ENCODE measurements at regions of chr16 and their contacts with region 1.

Region 1: DNA sequence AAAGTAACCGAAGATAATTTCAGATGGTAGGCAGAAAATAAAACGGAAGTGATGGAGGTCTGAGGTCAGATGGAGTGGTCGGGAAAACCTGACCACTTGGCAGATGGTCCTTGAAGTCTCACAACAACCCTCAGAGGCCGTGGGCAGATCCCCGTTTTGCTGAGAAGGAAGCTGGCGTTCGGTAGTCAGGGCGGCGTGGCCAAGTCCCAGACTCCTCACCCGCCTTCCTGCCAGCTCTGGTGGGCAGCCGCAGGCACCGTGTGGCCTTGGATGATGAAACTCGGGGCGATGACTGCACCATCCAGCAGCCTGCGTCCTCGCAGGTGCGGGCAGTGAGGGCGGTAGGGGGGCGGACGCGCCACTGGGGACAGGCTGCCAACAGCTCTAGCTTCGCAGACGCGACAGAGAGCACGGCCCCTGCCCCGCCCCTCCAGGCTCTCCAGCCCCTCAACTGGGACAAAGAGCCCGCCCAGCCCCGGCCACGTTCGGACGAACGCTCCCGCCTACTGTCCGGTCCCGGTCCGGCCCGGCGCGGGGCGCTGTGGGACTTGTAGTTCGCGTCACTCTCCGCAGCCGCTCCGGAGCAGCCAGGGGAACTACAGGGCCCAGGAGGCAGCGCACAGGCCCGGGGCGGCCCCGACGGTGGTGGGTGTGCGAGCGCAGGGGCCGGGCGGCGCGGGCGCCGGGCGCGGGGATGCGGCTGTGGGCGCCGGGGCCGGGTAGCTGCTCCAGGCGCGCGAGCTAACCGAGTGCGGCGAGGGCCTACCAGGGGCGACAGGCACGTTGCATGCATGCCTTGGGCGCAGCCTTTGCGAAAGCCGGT is at the start of gene GPT2:
- DNase-seq: peak; percentile 82
- H3K4me3 Mint-ChIP-seq: peak within 1 kb of the TSS; percentile 87
- H3K27ac Mint-ChIP-seq: peak within 1 kb of the TSS; percentile 76
- H3K4me1 Mint-ChIP-seq: peaks cover 17% of the 10 kb centered on the region
- H3K27me3 Mint-ChIP-seq: peaks cover 12% of the 10 kb centered on the region
- total RNA-seq, gene GPT2: 20.9 and 22.3 TPM in 2 replicates

Region 2: GRCh38 chr16:46789499-46790414 is 94.1 kb before region 1 on chr16:
- intact Hi-C with region 1: loop called (anchors 5 kb)
- DNase-seq: peak; percentile 79
- H3K4me3 Mint-ChIP-seq: peak overlapping the region; percentile 61
- H3K27ac Mint-ChIP-seq: peak overlapping the region; percentile 59
- H3K4me1 Mint-ChIP-seq: peaks cover 22% of the 10 kb centered on the region
- H3K27me3 Mint-ChIP-seq: peaks cover 4% of the 10 kb centered on the region

Region 3: GRCh38 chr16:46853713-46854443 is 30.0 kb before region 1 on chr16:
- intact Hi-C with region 1: loop called (anchors 1 kb)
- DNase-seq: peak; percentile 62
- H3K4me3 Mint-ChIP-seq: no peak overlapping the region
- H3K27ac Mint-ChIP-seq: no peak overlapping the region
- H3K4me1 Mint-ChIP-seq: no peaks in the 10 kb centered on the region
- H3K27me3 Mint-ChIP-seq: peaks cover 1% of the 10 kb centered on the region

Region 4: GRCh38 chr16:46908540-46909372 is 24.9 kb after region 1 on chr16:
- intact Hi-C with region 1: loop called (anchors 1 kb)
- DNase-seq: peak; percentile 37
- H3K4me3 Mint-ChIP-seq: no peak overlapping the region
- H3K27ac Mint-ChIP-seq: peak overlapping the region; percentile 34
- H3K4me1 Mint-ChIP-seq: peaks cover 16% of the 10 kb centered on the region
- H3K27me3 Mint-ChIP-seq: no peaks in the 10 kb centered on the region

Region 5: DNA sequence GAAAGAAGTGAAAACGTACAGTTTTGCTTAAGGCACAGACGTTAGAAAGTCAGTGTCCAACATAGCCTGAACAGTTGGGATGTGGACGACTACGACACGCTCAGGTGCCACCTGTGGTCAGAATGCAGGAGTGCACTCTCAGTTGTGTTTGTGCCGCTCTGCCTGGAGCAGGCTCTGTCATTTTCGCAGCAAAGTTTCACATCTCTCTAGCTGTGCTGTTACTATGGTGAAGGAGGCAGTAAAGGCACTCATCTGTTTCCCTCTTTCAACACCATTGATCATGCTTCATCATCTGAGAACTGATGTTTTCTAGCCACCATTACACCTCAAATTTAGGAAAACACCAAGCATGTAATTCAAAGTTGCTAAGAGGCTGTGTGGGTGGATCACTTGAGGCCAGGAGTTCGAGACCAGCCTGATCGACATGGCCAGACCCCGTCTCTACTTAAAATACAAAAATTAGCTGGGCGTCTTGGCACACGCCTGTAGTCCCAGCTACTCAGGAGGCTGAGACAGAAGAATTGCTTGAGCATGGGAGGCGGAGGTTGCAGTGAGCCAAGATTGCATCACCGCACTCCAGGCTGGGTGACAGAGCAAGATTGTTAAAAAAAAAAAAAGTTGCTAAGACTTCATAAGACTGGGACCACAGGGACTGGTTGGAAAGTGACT is 134.5 kb after region 1 on chr16:
- intact Hi-C with region 1: no loop called
- DNase-seq: peak; percentile 24
- H3K4me3 Mint-ChIP-seq: no peak overlapping the region
- H3K27ac Mint-ChIP-seq: no peak overlapping the region
- H3K4me1 Mint-ChIP-seq: peaks cover 23% of the 10 kb centered on the region
- H3K27me3 Mint-ChIP-seq: peaks cover 4% of the 10 kb centered on the region

Measured in activated T-helper 1 cell treated with anti-CD3 and anti-CD28 coated beads, Interleukin-12 subunit alpha, Interleukin-12 subunit beta, Interleukin-2, Interleukin-4 antibody, amounts not matched to agents 30 ng/mL and 10 ng/mL and 1 ng/mL, durations not matched to agents 14 hours and 24 hours and 36 hours (primary cell).